Uterus (tissue), 4 donors: ENCODE measurements at regions of chr12 and their contacts with region 1.

Region 1: GRCh38 chr12:50174971-50175715 is 8.0 kb upstream of the CERS5 start:
- DNase-seq: peak in 1 of 2 donors; percentile 33
- H3K4me3 ChIP-seq: no peak overlapping the region
- H3K27ac ChIP-seq: peak overlapping the region in 1 of 2 donors; percentile 7
- H3K4me1 ChIP-seq: no peaks in the 10 kb centered on the region
- H3K27me3 ChIP-seq: no peaks in the 10 kb centered on the region
- CTCF ChIP-seq: peak; percentile 59 to 87 (median 80)
- POLR2A ChIP-seq: no peak

Region 2: GRCh38 chr12:50006789-50007436 is 168.2 kb before region 1 on chr12:
- intact Hi-C with region 1: no loop called
- DNase-seq: no peak
- H3K4me3 ChIP-seq: no peak overlapping the region
- H3K27ac ChIP-seq: no peak overlapping the region
- H3K4me1 ChIP-seq: no peaks in the 10 kb centered on the region
- H3K27me3 ChIP-seq: no peaks in the 10 kb centered on the region
- CTCF ChIP-seq: no peak
- POLR2A ChIP-seq: no peak

Region 3: GRCh38 chr12:50074936-50075807 is 100.0 kb before region 1 on chr12:
- intact Hi-C with region 1: loop called (anchors 10 kb)
- DNase-seq: peak; percentile 83 to 85
- H3K4me3 ChIP-seq: no peak overlapping the region
- H3K27ac ChIP-seq: no peak overlapping the region
- H3K4me1 ChIP-seq: no peaks in the 10 kb centered on the region
- H3K27me3 ChIP-seq: no peaks in the 10 kb centered on the region
- CTCF ChIP-seq: peak; percentile 93 to 98 (median 94)
- POLR2A ChIP-seq: no peak

Region 4: DNA sequence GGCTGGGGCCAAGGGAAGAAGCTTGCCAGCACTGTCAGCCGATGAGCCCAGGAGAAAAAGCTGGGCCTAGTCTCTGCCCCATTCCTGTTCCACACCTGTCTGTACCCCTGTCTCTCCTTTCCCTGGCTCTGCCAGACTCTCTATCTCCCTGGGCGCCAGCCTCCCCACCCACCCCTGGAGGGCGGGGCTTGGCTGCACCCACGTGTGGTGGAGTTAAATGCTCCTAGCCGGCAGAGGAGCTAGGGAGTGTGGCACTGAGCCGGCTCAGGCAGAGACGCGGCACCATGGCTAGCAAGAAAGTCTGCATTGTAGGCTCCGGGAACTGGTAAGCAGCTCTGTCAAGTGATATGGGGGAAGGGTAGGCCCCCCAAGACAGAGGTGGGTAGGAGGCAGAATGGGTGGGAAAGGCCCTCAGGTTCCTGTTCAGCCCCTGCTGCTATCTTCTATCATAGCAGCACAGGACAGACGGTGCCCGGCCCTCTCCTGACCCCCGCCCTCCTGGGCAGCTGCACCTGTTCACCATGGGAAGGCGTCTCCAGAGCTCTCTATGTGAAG is 71.3 kb before region 1 on chr12 and contains the start of gene GPD1:
- intact Hi-C with region 1: loop called (anchors 10 kb)
- DNase-seq: peak; percentile 62 to 71
- H3K4me3 ChIP-seq: no peak within 1 kb of the TSS
- H3K27ac ChIP-seq: peak within 1 kb of the TSS in 1 of 2 donors; percentile 16
- H3K4me1 ChIP-seq: no peaks in the 10 kb centered on the region
- H3K27me3 ChIP-seq: no peaks in the 10 kb centered on the region
- CTCF ChIP-seq: no peak
- POLR2A ChIP-seq: no peak
- total RNA-seq, gene GPD1: not detected